ENCODE measurements at regions of chr5 and their contacts with region 1.

Region 1: GRCh38 chr5:38809388-38810359 is 36.1 kb upstream of the OSMR start:
- DNase-seq: peak; percentile 88
- H3K4me3 ChIP-seq: no peak overlapping the region
- CTCF ChIP-seq: peak; percentile 77

Region 2: DNA sequence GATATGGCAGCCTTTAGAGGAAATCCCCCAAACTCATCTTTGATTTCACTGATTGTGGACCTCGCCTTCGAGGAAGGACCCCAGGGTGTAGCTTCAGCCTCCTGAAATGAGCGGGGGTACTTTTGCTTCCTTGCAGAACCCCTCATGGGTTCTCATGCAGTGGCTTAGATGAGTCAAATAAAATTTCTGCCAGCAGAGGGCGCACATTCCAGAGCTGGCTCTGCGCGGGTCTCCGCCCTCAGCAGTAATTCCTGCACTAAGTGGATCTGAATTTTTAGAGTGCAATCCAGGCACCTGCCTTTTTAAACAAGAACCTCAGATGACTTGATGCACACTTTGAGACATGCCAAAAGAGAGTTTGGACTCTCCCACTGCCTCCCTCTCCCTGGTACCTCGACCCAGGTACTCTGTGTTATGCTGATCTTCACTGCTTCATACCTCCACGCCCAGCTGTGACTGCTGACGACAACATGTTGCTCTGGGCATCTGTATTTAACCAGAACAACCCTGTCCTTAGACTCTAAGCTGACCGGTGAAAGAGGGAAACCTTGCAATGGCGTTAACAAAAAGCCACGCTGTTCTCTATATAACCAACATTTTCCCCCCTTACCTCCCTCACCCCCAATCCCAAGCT is 544.0 kb before region 1 on chr5:
- in situ Hi-C with region 1: loop called (anchors 25 kb)
- DNase-seq: peak; percentile 33
- H3K4me3 ChIP-seq: no peak overlapping the region
- CTCF ChIP-seq: peak; percentile 71

Region 3: GRCh38 chr5:38434966-38435705 is 374.5 kb before region 1 on chr5:
- in situ Hi-C with region 1: loop called (anchors 5 kb)
- DNase-seq: no peak
- H3K4me3 ChIP-seq: no peak overlapping the region
- CTCF ChIP-seq: no peak

Region 4: GRCh38 chr5:38745836-38746732 is 63.6 kb before region 1 on chr5:
- in situ Hi-C with region 1: loop called (anchors 10 kb)
- DNase-seq: no peak
- H3K4me3 ChIP-seq: no peak overlapping the region
- CTCF ChIP-seq: no peak

Region 5: DNA sequence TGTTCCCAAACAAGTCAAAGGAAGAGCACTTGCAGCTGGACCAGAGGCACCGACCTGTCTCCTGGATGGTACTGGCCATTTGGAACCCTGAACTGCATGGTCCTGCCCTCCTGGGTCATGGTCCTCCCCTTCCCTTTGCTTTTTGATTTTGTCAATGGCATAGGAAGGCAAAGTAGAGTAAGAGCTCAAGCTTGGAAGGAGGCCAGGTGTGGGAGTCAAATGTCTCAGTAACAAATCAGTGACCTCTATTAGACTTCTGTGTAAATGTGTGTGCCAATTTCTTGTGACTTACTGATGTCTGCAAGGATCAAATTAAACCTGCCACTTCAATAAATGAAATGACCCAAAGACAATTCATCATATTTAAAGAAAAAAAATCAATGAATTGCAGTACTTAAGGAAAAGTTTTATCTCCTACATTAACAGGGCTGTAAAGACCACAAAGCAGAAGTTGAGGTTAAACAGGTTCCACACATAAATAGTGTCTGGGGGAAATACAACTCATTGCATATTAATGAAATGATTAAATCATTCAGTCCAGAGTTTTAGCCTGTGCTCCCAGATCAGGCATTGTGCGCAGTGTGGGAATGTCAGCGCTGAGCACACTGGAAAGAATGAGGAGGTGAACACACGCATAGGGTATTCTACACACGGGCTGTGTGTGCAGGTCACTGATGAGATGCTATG is 68.9 kb after region 1 on chr5:
- in situ Hi-C with region 1: no loop called
- DNase-seq: no peak
- H3K4me3 ChIP-seq: no peak overlapping the region
- CTCF ChIP-seq: no peak